ENCODE measurements at regions of chr15 and their contacts with region 1.

Region 1: GRCh38 chr15:41774062-41774881 is at the start of gene MAPKBP1:
- DNase-seq: peak; percentile 98
- ATAC-seq: peak; percentile 92
- H3K4me3 ChIP-seq: peak within 1 kb of the TSS; percentile 80
- H3K27ac ChIP-seq: peak within 1 kb of the TSS; percentile 84
- H3K4me1 ChIP-seq: peaks cover 13% of the 10 kb centered on the region
- H3K27me3 ChIP-seq: no peaks in the 10 kb centered on the region
- CTCF ChIP-seq: peak; percentile 97
- POLR2A ChIP-seq: peak; percentile 47
- RAD21 ChIP-seq: peak; percentile 69
- total RNA-seq, gene MAPKBP1: 10.3 and 12.5 TPM in 2 replicates

Region 2: DNA sequence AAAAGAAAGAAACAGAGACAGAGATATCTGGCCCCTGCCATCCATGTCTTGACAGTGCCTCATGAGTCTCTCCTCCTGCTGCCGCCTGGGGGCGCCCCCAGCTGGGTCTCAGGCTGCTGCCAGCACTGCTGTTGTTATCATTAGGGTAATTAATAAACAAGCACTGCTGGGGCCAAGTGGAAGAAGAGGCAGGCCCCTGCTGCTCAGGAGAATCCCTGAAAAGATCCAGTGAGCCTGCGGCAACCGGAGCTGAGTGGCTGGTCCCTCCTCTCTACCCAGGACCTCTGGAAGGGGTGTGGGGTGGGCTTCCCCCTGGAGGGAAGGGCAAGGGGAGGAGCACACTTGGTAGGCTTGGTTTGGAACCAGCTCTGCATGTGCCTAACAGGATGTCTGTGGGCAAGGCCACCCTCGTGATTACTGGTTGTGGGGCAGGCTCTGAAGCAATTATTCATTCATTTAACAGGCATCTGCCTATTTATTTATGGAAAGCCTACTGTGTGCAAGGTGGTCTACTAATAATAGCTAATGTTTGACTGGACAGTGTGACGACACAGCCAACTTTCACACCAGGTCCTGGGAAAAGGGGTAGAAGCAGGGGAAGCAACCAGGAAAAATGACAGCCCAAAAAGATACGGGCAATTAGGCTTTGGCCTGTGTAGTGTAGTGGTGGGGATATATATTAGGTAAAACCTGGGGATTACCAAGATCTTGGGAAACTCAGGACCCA is 216.4 kb before region 1 on chr15:
- CTCF ChIA-PET with region 1: interaction called, 7 read pairs
- POLR2A ChIA-PET with region 1: no interaction called
- dilution Hi-C with region 1: no loop called
- in situ Hi-C with region 1: no loop called
- intact Hi-C with region 1: loop called (anchors 2 kb)
- DNase-seq: peak; percentile 67
- ATAC-seq: peak; percentile 50
- H3K4me3 ChIP-seq: no peak overlapping the region; the same call in 1 of the 2 replicates
- H3K27ac ChIP-seq: no peak overlapping the region
- H3K4me1 ChIP-seq: peaks cover 25% of the 10 kb centered on the region
- H3K27me3 ChIP-seq: no peaks in the 10 kb centered on the region
- CTCF ChIP-seq: peak; percentile 81
- POLR2A ChIP-seq: no peak
- RAD21 ChIP-seq: peak; percentile 87

Region 3: DNA sequence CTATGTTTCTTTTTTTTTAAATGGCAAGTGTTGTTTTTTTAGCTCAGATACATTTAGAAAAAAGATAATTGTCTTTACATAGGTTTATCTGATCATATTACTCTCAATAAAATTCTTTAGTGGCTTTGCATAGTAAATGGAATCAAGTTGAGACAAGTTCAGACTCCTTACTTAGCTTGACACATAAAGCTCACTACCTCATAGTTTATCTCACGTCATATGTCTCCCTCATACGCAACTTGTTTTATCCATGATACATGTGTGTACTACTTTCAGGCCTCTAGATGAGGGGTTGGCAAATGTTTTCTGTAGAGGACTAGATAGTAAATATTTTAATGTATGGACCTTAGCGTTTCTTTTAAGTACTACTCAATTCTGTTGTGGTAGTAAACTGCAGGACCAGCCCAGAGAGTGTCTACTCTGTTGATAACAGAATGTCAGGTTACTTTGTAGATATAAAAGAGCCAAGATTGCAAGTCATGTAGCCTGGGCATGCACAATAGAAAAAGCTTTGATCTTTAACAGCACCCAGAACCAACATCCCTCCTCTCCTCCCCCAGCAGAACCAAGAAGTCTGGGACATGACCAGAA is 142.3 kb before region 1 on chr15:
- CTCF ChIA-PET with region 1: no interaction called
- POLR2A ChIA-PET with region 1: interaction called, 12 read pairs
- dilution Hi-C with region 1: no loop called
- in situ Hi-C with region 1: no loop called
- intact Hi-C with region 1: no loop called
- DNase-seq: no peak
- ATAC-seq: no peak
- H3K4me3 ChIP-seq: no peak overlapping the region
- H3K27ac ChIP-seq: no peak overlapping the region
- H3K4me1 ChIP-seq: no peaks in the 10 kb centered on the region
- H3K27me3 ChIP-seq: no peaks in the 10 kb centered on the region
- CTCF ChIP-seq: no peak
- POLR2A ChIP-seq: no peak
- RAD21 ChIP-seq: no peak

Region 4: DNA sequence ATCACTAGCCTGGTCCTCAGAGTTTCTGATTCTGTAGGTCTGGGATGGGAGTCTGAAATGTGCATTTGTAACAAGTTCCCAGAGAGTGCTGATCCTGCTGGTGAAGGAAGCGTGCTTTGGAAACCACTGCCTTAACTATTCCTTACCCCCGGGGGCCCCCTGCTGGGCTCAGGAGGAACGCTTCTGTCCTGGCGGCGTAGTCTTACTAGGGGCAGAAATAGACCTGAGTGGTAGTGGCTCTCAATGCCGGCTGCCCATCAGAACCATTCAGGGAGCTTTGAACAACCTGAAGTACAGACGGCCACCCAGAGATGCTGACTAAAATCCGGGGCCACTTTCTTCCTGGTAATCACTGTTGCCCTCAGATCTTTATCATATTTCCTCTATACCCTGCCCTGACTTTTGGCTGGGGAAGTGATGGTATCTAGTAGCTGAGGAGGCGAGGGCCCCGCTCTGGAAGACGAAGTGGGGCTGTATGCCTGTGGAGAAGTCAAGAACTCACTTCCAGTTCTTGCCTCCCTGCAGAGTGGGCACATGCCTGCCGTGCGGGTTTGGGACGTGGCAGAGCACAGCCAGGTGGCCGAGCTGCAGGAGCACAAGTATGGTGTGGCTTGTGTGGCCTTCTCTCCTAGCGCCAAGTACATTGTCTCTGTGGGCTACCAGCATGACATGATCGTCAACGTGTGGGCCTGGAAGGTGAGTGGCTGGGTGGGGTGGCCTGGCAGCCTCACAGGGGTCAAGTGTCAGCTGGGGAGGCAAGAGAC is 37.3 kb after region 1 on chr15:
- CTCF ChIA-PET with region 1: interaction called, 54 read pairs
- POLR2A ChIA-PET with region 1: interaction called, 3 read pairs
- dilution Hi-C with region 1: no loop called
- in situ Hi-C with region 1: loop called (anchors 5 kb)
- intact Hi-C with region 1: loop called (anchors 1 kb)
- DNase-seq: peak; percentile 81
- ATAC-seq: peak; percentile 100
- H3K4me3 ChIP-seq: no peak overlapping the region
- H3K27ac ChIP-seq: no peak overlapping the region
- H3K4me1 ChIP-seq: peaks cover 3% of the 10 kb centered on the region
- H3K27me3 ChIP-seq: no peaks in the 10 kb centered on the region
- CTCF ChIP-seq: peak; percentile 97
- POLR2A ChIP-seq: peak; percentile 62
- RAD21 ChIP-seq: peak; percentile 99

Region 5: GRCh38 chr15:41904541-41905005 is 130.3 kb after region 1 on chr15:
- CTCF ChIA-PET with region 1: interaction called, 6 read pairs
- POLR2A ChIA-PET with region 1: no interaction called
- dilution Hi-C with region 1: no loop called
- in situ Hi-C with region 1: no loop called
- intact Hi-C with region 1: loop called (anchors 1 kb)
- DNase-seq: peak; percentile 65
- ATAC-seq: peak; percentile 98
- H3K4me3 ChIP-seq: no peak overlapping the region
- H3K27ac ChIP-seq: no peak overlapping the region
- H3K4me1 ChIP-seq: no peaks in the 10 kb centered on the region
- H3K27me3 ChIP-seq: no peaks in the 10 kb centered on the region
- CTCF ChIP-seq: peak; percentile 85
- POLR2A ChIP-seq: no peak
- RAD21 ChIP-seq: peak; percentile 92

Measured in IMR-90 (cell line).